ENCODE measurements at regions of chr2 and their contacts with region 1.

Region 1: GRCh38 chr2:113756355-113757137 is at the start of gene SLC35F5:
- DNase-seq: peak; percentile 93
- ATAC-seq: peak; percentile 90
- H3K4me3 Mint-ChIP-seq: peak within 1 kb of the TSS; percentile 90
- H3K27ac Mint-ChIP-seq: peak within 1 kb of the TSS; percentile 100
- H3K4me1 Mint-ChIP-seq: peaks cover 28% of the 10 kb centered on the region
- H3K27me3 Mint-ChIP-seq: no peaks in the 10 kb centered on the region
- total RNA-seq, gene SLC35F5: 21.6 to 26.5 TPM

Region 2: DNA sequence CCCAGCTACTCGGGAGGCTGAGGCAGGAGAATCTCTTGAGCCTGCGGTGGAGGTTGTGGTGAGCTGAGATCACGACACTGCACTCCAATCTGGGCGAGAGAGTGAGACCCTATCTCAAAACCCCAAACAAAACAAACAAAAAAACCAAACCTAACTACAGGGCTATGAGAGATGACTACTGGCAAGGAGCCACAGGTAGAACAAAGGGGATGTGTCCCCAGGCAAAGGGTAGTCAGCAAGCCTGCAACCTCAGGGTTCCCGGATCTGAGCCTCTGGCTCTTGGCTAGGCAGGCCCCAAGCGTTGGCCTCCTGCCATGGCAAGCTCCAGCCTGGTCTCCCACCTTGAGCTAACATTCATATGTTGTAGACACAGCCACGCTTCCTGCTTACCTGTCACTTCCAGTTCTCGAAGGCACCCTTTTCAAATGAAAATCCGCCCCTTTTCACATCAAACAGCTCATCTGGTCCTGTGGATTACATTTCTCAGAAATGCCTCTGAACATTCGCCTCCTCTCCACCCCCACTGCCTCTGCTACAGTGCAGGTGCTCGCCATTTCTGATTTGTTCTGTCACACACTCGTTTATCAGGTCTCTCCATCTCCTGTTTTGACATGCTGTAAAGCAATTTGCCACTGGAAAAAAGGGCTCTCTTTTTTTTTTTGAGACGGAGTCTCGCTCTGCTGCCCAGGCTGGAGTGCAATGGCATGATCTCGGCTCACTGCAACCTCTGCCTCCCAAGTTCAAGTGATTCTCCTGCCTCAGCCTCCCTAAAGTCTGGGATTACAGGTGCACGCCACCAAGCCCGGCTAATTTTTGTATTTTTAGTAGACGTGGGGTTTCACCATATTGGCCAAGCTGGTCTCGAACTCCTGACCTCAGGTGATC is 120.2 kb after region 1 on chr2:
- CTCF ChIA-PET with region 1: interaction called, 10 read pairs
- DNase-seq: peak; percentile 84
- ATAC-seq: peak; percentile 91
- H3K4me3 Mint-ChIP-seq: peak overlapping the region; percentile 29
- H3K27ac Mint-ChIP-seq: peak overlapping the region; percentile 80
- H3K4me1 Mint-ChIP-seq: peaks cover 56% of the 10 kb centered on the region
- H3K27me3 Mint-ChIP-seq: no peaks in the 10 kb centered on the region